ENCODE measurements at regions of chr9 and their contacts with region 1.

Region 1: DNA sequence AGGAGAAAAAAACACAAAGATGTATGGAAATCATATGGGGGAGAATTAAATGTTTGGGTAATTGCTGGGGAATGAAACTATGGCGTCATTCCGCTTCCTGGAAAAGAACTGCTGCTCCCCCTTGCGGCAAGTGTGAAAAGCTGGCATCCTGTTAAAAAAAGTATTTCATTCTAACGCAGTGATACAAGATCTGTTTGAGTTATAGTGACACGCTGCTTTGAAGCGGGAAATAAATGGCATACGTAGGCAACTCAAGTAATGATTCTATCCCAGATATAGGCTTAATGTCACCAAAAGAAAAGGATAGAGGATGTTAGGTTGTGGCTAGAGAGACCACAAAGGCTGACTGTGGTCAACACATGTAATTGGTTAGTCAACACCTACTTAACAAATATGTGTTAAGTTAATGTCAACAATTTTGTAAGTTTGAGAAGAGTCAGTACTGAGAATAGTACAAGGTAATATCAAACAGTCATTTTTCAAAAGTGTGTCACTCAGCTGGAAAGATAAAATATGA is 70.2 kb upstream of the ALDH1A1 start:
- DNase-seq: peak; percentile 48
- H3K4me3 ChIP-seq: no peak overlapping the region
- H3K27ac ChIP-seq: no peak overlapping the region
- H3K4me1 ChIP-seq: no peaks in the 10 kb centered on the region
- H3K27me3 ChIP-seq: no peaks in the 10 kb centered on the region
- CTCF ChIP-seq: peak; percentile 87

Region 2: GRCh38 chr9:72871685-72872084 is 151.4 kb before region 1 on chr9:
- CTCF ChIA-PET with region 1: interaction called, 6 read pairs
- dilution Hi-C with region 1: no loop called
- in situ Hi-C with region 1: loop called in 1 of 2 experiments (anchors 5 kb)
- intact Hi-C with region 1: loop called (anchors 1 kb)
- DNase-seq: peak; percentile 21
- H3K4me3 ChIP-seq: no peak overlapping the region
- H3K27ac ChIP-seq: no peak overlapping the region
- H3K4me1 ChIP-seq: no peaks in the 10 kb centered on the region
- H3K27me3 ChIP-seq: no peaks in the 10 kb centered on the region
- CTCF ChIP-seq: peak; percentile 19 to 52

Measured in mammary epithelial cell (primary cell).